ENCODE measurements at regions of chr16 and their contacts with region 1.

Region 1: GRCh38 chr16:21708533-21709115 is 44.9 kb downstream of the OTOA start:
- DNase-seq: peak; percentile 94
- ATAC-seq: peak; percentile 45
- H3K4me3 Mint-ChIP-seq: no peak overlapping the region
- H3K27ac Mint-ChIP-seq: no peak overlapping the region
- H3K4me1 Mint-ChIP-seq: peaks cover 2% of the 10 kb centered on the region
- H3K27me3 Mint-ChIP-seq: no peaks in the 10 kb centered on the region
- CTCF ChIP-seq: peak; percentile 88

Region 2: DNA sequence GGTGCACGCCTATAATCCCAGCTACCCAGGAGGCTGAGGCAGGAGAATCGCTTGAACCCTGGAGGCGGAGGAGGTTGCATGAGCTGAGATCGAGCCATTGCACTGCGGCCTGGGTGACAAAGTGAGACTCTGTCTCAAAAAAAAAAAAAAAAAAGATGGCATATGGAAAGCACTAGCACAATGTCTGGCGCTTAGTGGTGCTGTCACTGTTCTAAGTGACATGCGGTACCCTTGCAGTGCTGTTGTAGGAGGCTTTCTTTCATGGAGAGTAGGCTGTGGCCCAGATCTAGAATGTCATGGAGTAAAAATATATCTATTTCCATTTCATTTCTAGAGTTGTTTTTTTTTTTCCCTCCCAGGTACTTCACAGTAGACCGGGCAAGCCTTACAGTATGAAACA is 123.8 kb before region 1 on chr16:
- CTCF ChIA-PET with region 1: interaction called, 58 read pairs
- POLR2A ChIA-PET with region 1: no interaction called
- intact Hi-C with region 1: loop called (anchors 5 kb)
- DNase-seq: no peak
- ATAC-seq: no peak
- H3K4me3 Mint-ChIP-seq: no peak overlapping the region
- H3K27ac Mint-ChIP-seq: no peak overlapping the region
- H3K4me1 Mint-ChIP-seq: peaks cover 2% of the 10 kb centered on the region
- H3K27me3 Mint-ChIP-seq: no peaks in the 10 kb centered on the region
- CTCF ChIP-seq: no peak

Region 3: DNA sequence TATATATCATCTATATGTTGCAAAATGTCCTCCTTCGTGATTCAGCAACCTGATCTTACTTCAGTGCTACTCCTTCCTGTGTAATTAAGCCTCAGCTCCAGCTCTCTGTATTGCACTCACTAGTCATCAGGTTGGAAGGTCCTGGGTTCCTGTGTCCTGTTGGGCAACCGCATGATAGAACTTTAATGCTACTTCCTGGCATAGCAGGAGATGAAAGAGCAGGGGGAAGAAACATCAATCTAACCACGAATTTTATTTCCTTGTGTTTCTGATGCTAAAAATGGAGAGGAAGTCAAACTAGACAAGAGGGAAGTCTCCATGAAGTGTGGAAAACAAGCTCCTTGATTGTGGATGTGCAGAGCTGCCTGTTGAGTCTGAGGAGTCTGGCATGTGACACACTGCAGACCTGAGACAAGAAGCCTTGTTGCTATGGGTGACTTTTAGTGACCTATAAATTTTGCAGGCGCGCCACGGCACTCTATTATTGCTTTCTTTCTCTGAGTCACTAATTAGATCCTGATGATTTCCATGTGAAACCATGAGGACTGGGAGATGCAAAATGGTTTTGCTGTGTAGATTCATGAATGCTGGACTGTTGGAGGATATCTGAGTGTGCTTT is 81.9 kb before region 1 on chr16:
- CTCF ChIA-PET with region 1: no interaction called
- POLR2A ChIA-PET with region 1: no interaction called
- intact Hi-C with region 1: no loop called
- DNase-seq: peak; percentile 45
- ATAC-seq: peak; percentile 95
- H3K4me3 Mint-ChIP-seq: no peak overlapping the region
- H3K27ac Mint-ChIP-seq: peak overlapping the region; percentile 72
- H3K4me1 Mint-ChIP-seq: peaks cover 37% of the 10 kb centered on the region
- H3K27me3 Mint-ChIP-seq: no peaks in the 10 kb centered on the region
- CTCF ChIP-seq: no peak

Region 4: DNA sequence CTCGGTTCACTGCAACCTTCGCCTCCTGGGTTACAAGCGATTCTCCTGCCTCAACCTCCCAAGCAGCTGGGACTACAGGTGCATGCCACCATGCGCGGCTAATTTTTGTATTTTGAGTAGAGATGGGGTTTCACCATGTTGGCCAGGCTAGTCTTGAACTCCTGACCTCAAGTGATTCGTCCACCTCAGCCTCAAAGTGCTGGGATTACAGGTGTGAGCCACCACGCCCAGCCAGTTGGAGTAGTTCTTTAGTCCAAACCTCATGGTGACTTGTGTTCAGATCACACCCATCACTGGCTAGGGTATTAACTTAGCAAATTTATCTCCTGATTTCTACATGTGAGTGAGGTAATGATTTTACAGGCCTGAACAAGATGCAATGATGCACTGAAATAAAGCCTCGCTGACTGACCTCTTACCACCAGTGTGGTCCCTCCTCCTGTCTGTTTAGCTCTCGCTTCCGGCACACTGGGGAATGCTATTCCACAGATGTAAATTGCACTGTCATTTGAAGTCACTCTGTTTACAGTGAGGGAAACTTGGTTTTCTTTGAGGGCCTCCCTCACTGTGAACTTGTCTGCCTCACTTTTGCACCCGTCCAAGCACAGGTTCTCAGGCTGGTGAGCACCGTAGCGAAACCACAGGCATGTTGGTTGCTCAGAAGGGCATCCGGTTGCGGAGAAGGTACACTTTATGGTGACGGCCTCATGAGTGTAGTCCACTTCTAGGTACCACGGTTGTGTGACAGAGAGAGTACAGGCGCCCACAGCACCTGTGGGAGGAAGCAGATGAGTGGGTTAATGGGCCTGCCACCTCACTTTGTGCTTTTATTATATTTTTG is 61.7 kb before region 1 on chr16:
- CTCF ChIA-PET with region 1: interaction called, 11 read pairs
- POLR2A ChIA-PET with region 1: interaction called, 4 read pairs
- intact Hi-C with region 1: no loop called
- DNase-seq: peak; percentile 93
- ATAC-seq: peak; percentile 91
- H3K4me3 Mint-ChIP-seq: peak overlapping the region; percentile 61
- H3K27ac Mint-ChIP-seq: peak overlapping the region; percentile 93
- H3K4me1 Mint-ChIP-seq: peaks cover 52% of the 10 kb centered on the region
- H3K27me3 Mint-ChIP-seq: no peaks in the 10 kb centered on the region
- CTCF ChIP-seq: no peak

Region 5: GRCh38 chr16:21684199-21684598 is 24.4 kb before region 1 on chr16:
- CTCF ChIA-PET with region 1: interaction called, 24 read pairs
- POLR2A ChIA-PET with region 1: interaction called, 3 read pairs
- intact Hi-C with region 1: no loop called
- DNase-seq: peak; percentile 56
- ATAC-seq: no peak
- H3K4me3 Mint-ChIP-seq: no peak overlapping the region
- H3K27ac Mint-ChIP-seq: no peak overlapping the region
- H3K4me1 Mint-ChIP-seq: no peaks in the 10 kb centered on the region
- H3K27me3 Mint-ChIP-seq: peaks cover under 1% of the 10 kb centered on the region
- CTCF ChIP-seq: peak; percentile 84

Region 6: GRCh38 chr16:21719283-21719682 is 10.7 kb after region 1 on chr16:
- CTCF ChIA-PET with region 1: interaction called, 21 read pairs
- POLR2A ChIA-PET with region 1: no interaction called
- intact Hi-C with region 1: no loop called
- DNase-seq: no peak
- ATAC-seq: no peak
- H3K4me3 Mint-ChIP-seq: no peak overlapping the region
- H3K27ac Mint-ChIP-seq: no peak overlapping the region
- H3K4me1 Mint-ChIP-seq: peaks cover 9% of the 10 kb centered on the region
- H3K27me3 Mint-ChIP-seq: no peaks in the 10 kb centered on the region
- CTCF ChIP-seq: no peak

Region 7: GRCh38 chr16:22070361-22071330 is 362.0 kb after region 1 on chr16:
- CTCF ChIA-PET with region 1: no interaction called
- POLR2A ChIA-PET with region 1: no interaction called
- intact Hi-C with region 1: no loop called
- DNase-seq: no peak
- ATAC-seq: no peak
- H3K4me3 Mint-ChIP-seq: no peak overlapping the region
- H3K27ac Mint-ChIP-seq: no peak overlapping the region
- H3K4me1 Mint-ChIP-seq: peaks cover 1% of the 10 kb centered on the region
- H3K27me3 Mint-ChIP-seq: no peaks in the 10 kb centered on the region
- CTCF ChIP-seq: no peak